Posterior vena cava (tissue), 2 donors: ENCODE measurements at regions of chr3 and their contacts with region 1.

Region 1: DNA sequence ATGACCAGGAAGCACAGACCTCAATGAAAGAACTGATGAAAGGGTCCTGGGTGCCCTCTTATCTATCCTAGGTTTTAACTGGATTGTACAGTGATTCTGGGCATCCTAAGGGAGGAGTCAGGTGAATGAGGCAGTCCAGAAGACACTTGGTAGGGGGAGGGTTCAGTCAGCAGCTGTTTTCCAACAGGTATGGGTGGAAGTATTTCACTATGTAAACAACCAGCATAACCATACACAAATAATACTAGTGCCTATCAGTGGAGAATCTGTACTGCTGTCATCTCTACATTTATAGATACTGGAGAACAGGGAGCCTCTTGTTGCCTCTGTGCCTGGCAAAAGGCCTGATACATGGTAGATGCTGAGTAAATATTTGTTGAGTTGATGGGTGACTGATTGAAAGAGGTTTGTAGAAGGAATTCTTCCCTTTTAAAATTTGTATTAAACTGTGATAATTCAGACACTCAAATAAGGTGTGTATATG is 328.5 kb downstream of the RBMS3 start:
- DNase-seq: no peak

Region 2: DNA sequence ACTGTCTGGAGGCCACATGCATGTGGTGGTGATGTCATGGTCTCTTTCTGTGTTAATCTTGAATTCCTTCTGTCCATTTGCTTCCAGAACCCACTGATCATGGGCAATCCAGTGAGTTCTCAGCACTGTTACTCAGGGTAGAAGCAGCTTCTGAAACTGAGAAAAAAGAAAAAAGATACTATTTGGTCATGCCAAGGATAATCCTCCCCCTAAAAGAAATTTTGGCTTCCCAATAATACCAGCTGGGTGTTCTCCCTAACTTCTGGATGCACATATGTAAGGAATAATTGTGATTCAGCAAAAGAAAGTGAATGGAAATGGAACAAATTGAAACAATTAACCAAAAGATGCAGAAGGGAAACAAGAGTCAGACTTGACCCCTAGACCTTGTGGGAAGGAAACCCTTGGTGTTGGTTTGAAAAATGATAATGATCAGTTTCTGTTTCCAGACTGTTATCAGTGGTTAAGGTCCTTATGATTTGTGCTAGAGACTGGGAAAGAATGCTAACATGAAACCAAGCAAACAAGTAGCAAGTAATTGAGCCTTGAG is 236.2 kb before region 1 on chr3:
- intact Hi-C with region 1: no loop called
- DNase-seq: no peak

Region 3: DNA sequence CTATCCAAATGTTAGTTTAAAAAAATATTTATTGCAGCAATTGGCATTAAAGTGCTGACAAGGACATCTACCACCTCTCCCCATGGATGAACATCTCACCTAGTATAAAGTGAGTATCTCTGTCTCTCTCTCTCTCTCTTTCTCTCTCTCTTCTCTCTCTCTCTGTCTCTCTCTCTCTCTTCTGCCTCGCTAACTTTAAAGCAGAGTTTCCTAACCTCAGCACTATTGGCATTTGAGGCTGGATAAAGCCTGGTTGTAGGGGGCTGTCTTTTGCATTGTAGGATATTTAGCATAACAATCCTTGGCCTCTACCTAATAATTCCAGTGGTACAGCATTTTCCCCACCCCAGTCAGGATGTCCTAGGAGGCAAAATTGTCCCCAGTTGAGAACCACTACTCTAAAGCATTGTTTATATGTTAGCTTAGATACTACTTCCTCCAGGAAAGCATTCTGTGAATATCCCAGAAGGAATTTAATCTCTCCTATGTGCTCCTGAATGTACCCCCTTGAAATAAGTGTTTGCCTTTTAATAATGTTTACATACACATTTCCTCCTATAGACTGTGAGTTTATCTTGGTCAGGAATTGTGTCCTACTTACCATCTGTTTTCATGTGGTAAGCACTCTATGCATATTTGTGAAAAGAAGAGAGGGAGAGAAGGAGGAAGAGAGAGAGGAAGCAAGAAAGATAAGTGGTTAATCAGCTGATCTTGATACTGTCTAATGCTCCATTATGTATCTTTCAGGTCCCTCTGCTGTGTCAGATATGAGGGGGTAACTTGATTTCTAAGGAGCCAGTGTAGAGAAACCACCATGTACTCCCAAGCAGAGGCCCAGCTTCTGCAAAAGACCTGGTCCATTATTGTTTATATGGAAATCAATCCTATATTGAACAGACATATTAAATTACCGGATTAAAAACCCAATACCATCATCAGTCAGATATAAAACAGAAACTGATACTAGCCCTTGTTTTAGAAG is 18.1 kb after region 1 on chr3:
- intact Hi-C with region 1: loop called in 1 of 2 experiments (anchors 1 kb)
- DNase-seq: no peak